ENCODE measurements at regions of chr13 and their contacts with region 1.

Region 1: GRCh38 chr13:24124789-24125476 is 35.6 kb upstream of the SPATA13 start:
- DNase-seq: no peak

Region 2: DNA sequence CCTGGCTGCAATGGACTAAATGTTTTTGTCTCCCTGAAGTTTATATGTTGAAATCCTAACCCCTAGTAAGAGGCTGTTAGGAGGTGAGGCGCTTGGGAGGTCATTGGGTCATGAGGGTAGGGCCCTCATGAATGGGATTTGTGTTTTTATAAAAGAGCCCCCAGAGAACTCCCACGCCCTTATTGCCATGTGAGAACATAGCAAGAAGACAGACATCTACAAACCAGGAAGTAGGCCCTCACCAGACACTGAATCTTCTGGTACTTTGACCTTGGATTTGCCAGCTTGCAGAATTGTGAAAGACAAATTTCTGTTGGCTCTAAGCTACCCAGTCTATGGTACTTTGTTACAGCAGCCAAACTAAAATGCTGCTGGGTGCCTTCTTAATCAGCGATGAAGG is 60.6 kb before region 1 on chr13:
- intact Hi-C with region 1: loop called (anchors 2 kb)
- DNase-seq: no peak

Measured in cardiac septum (tissue), 1 donor.